ENCODE measurements at regions of chr5 and their contacts with region 1.

Region 1: DNA sequence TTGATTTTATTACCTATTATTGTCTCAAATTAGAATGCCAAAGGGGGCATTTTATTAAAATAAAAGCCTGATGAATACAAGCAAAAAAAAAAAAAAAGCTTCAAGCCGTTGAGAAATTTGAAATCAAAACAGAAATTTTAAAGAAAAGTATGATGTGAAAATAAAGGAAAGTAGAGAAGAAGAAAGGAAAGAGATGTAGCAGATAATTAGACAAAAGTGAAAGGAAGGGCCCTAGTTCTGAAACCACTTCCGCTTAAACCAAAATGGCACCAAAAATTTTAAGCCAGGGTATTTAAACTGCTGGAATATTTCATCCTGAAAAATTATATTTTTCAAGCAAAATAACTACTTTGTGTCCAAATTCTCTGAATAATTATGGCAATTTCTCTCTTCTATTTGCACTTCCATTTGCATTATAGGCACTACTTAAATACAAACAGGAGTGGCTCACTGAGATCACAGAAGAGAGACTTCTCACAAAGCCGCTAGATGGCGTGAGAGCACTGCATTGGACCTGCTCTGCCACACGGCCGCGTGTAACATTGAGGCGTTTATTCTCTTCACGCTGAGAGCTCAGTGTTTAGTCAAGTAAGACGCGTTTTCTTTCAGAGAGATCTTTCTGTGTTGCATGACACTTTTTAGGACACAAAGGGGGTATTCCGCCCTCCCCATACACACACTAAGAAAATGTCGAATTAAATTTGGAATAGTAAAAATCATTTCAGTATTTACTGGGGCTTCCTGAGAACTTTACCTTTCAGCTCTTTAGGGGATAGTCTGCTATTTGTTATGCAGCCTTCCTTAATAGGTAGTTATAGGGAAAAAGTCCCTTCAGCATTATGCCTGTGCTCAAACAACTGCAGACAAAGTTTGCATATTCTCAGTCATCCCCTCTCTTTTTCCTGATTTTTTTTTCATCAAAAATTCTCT is 368.4 kb upstream of the CCNH start:
- DNase-seq: peak; percentile 11 to 84
- ATAC-seq: peak; percentile 100
- H3K4me3 ChIP-seq: no peak overlapping the region
- H3K27ac ChIP-seq: no peak overlapping the region
- H3K4me1 ChIP-seq: no peaks in the 10 kb centered on the region
- CTCF ChIP-seq: peak; percentile 92
- EP300 ChIP-seq: no peak
- POLR2A ChIP-seq: no peak
- RAD21 ChIP-seq: peak; percentile 95 to 97

Region 2: GRCh38 chr5:87770601-87771121 is 10.4 kb before region 1 on chr5:
- CTCF ChIA-PET with region 1: interaction called, 18 read pairs
- POLR2A ChIA-PET with region 1: no interaction called
- DNase-seq: no peak
- ATAC-seq: no peak
- H3K4me3 ChIP-seq: no peak overlapping the region
- H3K27ac ChIP-seq: no peak overlapping the region
- H3K4me1 ChIP-seq: no peaks in the 10 kb centered on the region
- CTCF ChIP-seq: no peak
- EP300 ChIP-seq: no peak
- POLR2A ChIP-seq: no peak
- RAD21 ChIP-seq: no peak

Region 3: DNA sequence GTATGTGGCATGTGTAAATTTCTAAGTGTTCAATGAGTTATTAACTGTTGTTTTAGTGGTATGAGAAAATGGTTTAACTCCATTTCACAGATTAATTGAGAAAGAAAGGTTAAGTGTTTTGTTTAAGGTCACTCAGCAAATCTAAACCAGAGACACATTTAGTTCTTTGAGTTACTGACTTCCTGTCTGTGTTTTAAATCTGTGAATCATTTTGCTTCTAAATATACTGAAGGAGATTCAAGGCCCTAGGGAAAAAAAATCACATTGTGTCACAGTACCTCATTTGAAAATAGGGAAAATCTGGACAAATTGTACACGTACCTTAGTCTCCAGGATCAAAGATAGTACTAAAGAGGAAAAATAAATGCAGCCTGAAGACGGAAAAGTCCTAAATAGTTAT is 119.3 kb after region 1 on chr5:
- CTCF ChIA-PET with region 1: no interaction called
- POLR2A ChIA-PET with region 1: no interaction called
- DNase-seq: no peak
- ATAC-seq: no peak
- H3K4me3 ChIP-seq: no peak overlapping the region
- H3K27ac ChIP-seq: no peak overlapping the region
- H3K4me1 ChIP-seq: no peaks in the 10 kb centered on the region
- CTCF ChIP-seq: no peak
- EP300 ChIP-seq: no peak
- POLR2A ChIP-seq: no peak
- RAD21 ChIP-seq: no peak

Region 4: GRCh38 chr5:88680253-88681132 is 899.4 kb after region 1 on chr5:
- CTCF ChIA-PET with region 1: interaction called, 26 read pairs
- POLR2A ChIA-PET with region 1: no interaction called
- DNase-seq: peak; percentile 56 to 81
- ATAC-seq: peak; percentile 86 to 95
- H3K4me3 ChIP-seq: peak overlapping the region; percentile 28
- H3K27ac ChIP-seq: peak overlapping the region in 1 of 2 experiments; percentile 73; a peak in 3 of 6 replicates
- H3K4me1 ChIP-seq: peaks cover 7% of the 10 kb centered on the region; the same call in 1 of the 3 replicates
- CTCF ChIP-seq: peak; percentile 90
- EP300 ChIP-seq: no peak
- POLR2A ChIP-seq: no peak
- RAD21 ChIP-seq: peak; percentile 78 to 94

Region 5: GRCh38 chr5:88690409-88691229 is 909.5 kb after region 1 on chr5:
- CTCF ChIA-PET with region 1: interaction called, 58 read pairs
- POLR2A ChIA-PET with region 1: no interaction called
- DNase-seq: peak; percentile 49 to 59
- ATAC-seq: peak; percentile 69 to 90
- H3K4me3 ChIP-seq: peak overlapping the region; percentile 27
- H3K27ac ChIP-seq: no peak overlapping the region
- H3K4me1 ChIP-seq: peaks cover 3% of the 10 kb centered on the region; the same call in 1 of the 3 replicates
- CTCF ChIP-seq: peak; percentile 93
- EP300 ChIP-seq: no peak
- POLR2A ChIP-seq: no peak
- RAD21 ChIP-seq: peak; percentile 91 to 92

Region 6: DNA sequence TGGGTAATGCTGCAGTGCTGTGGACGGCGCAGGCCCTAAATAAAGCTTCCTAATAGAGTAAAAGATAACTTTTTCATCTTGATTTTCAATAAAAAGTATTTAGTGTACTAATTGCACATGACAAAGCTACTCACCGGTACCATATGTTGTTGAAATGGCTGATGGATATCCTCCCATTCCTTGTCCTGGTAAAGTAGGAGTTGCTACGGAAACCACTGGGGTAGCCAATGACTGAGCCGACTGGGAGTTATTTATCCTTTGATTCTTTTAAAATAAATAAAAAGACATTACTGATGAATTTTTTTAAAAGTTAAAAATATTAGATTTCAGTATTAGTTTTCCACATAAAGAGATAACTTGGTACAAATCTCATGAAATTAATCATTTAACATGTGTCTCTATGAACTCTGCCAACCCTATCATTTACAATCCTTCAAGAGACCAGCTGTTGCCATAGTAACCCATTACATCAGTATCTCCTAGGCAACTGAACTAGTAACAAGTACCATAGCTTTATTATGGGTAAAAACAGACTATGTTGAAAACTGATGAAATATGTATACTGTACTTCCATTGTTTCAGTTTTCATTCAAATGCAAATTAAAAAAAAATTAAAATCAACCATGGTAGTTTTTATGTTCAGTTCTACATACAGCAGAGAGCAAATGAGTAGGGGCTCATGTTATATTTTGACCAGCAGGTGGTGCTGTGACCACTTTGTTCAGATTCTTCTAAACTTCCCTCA is 948.2 kb after region 1 on chr5:
- CTCF ChIA-PET with region 1: interaction called, 76 read pairs
- POLR2A ChIA-PET with region 1: no interaction called
- DNase-seq: peak; percentile 13 to 75
- ATAC-seq: peak; percentile 92 to 97
- H3K4me3 ChIP-seq: no peak overlapping the region
- H3K27ac ChIP-seq: no peak overlapping the region
- H3K4me1 ChIP-seq: no peaks in the 10 kb centered on the region
- CTCF ChIP-seq: peak; percentile 87
- EP300 ChIP-seq: no peak
- POLR2A ChIP-seq: no peak
- RAD21 ChIP-seq: peak; percentile 85 to 89

Measured in A549 (cell line).